Common myeloid progenitor, CD34-positive (primary cell): ENCODE measurements at regions of chr19 and their contacts with region 1.

Region 1: GRCh38 chr19:8487137-8487851 is 15.1 kb downstream of the PRAM1 start:
- DNase-seq: peak; percentile 85 to 98 (median 97)
- H3K4me3 ChIP-seq: peak overlapping the region in 4 of 7 experiments; percentile 3 to 37 (median 17)
- H3K27ac ChIP-seq: peak overlapping the region in 1 of 2 experiments; percentile 55
- H3K4me1 ChIP-seq: peaks cover 5 to 56% (median 47%) of the 10 kb centered on the region in 4 experiments
- H3K27me3 ChIP-seq: no peaks in the 10 kb centered on the region

Region 2: GRCh38 chr19:8324186-8325050 is 162.9 kb before region 1 on chr19:
- CTCF ChIA-PET with region 1: no interaction called
- POLR2A ChIA-PET with region 1: no interaction called
- DNase-seq: no peak
- H3K4me3 ChIP-seq: no peak overlapping the region
- H3K27ac ChIP-seq: no peak overlapping the region
- H3K4me1 ChIP-seq: peaks cover 5 to 42% (median 33%) of the 10 kb centered on the region in 4 experiments
- H3K27me3 ChIP-seq: peaks cover 0 to 14% (median 5%) of the 10 kb centered on the region in 5 experiments

Region 3: GRCh38 chr19:8412783-8413628 is 74.3 kb before region 1 on chr19 and contains the start of gene MARCHF2:
- CTCF ChIA-PET with region 1: interaction called, 11 read pairs
- POLR2A ChIA-PET with region 1: no interaction called
- DNase-seq: peak; percentile 96 to 98 (median 97)
- H3K4me3 ChIP-seq: peak within 1 kb of the TSS; percentile 53 to 89 (median 79)
- H3K27ac ChIP-seq: peak within 1 kb of the TSS in 1 of 2 experiments; percentile 70
- H3K4me1 ChIP-seq: peaks cover 5 to 43% (median 39%) of the 10 kb centered on the region in 4 experiments
- H3K27me3 ChIP-seq: no peaks in the 10 kb centered on the region

Region 4: GRCh38 chr19:8463365-8463764 is 23.9 kb before region 1 on chr19:
- CTCF ChIA-PET with region 1: no interaction called
- POLR2A ChIA-PET with region 1: no interaction called
- DNase-seq: no peak
- H3K4me3 ChIP-seq: no peak overlapping the region
- H3K27ac ChIP-seq: no peak overlapping the region
- H3K4me1 ChIP-seq: peaks cover 0 to 1% (median under 1%) of the 10 kb centered on the region in 4 experiments
- H3K27me3 ChIP-seq: no peaks in the 10 kb centered on the region

Region 5: DNA sequence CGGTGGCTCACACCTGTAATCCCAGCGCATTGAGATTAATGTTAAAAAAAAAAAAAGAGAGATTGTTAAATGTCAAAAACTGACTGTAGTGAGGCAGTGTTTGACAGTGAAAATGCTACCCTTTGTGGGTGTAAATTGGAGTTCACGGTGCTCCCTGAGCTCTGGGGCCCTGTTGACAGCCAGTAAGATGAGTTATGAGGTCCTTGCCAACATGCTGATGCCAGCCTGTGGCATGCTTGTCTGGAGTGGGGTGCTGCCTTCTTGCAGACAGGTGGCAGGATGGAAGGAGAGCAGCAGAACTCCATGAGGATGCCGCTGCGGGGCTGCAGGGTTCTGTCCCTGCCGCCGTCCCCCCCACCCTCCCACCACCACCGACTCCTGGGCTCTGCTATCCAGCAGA is 10.8 kb before region 1 on chr19:
- CTCF ChIA-PET with region 1: interaction called, 14 read pairs
- POLR2A ChIA-PET with region 1: interaction called, 4 read pairs
- DNase-seq: no peak
- H3K4me3 ChIP-seq: no peak overlapping the region
- H3K27ac ChIP-seq: no peak overlapping the region
- H3K4me1 ChIP-seq: peaks cover 3 to 23% (median 14%) of the 10 kb centered on the region in 4 experiments
- H3K27me3 ChIP-seq: no peaks in the 10 kb centered on the region

Region 6: GRCh38 chr19:8500158-8500557 is 12.9 kb after region 1 on chr19:
- CTCF ChIA-PET with region 1: interaction called, 94 read pairs
- POLR2A ChIA-PET with region 1: interaction called, 20 read pairs
- DNase-seq: peak in 2 of 3 donors; percentile 68 to 70
- H3K4me3 ChIP-seq: peak overlapping the region in 6 of 7 experiments; percentile 7 to 64 (median 50)
- H3K27ac ChIP-seq: peak overlapping the region in 1 of 2 experiments; percentile 40
- H3K4me1 ChIP-seq: peaks cover 14 to 90% (median 65%) of the 10 kb centered on the region in 4 experiments
- H3K27me3 ChIP-seq: no peaks in the 10 kb centered on the region

Region 7: GRCh38 chr19:8505680-8506401 is 18.5 kb after region 1 on chr19:
- CTCF ChIA-PET with region 1: interaction called, 94 read pairs
- POLR2A ChIA-PET with region 1: interaction called, 20 read pairs
- DNase-seq: peak in 2 of 3 donors; percentile 55 to 60
- H3K4me3 ChIP-seq: peak overlapping the region; percentile 51 to 85 (median 68)
- H3K27ac ChIP-seq: no peak overlapping the region
- H3K4me1 ChIP-seq: peaks cover 14 to 63% (median 58%) of the 10 kb centered on the region in 4 experiments
- H3K27me3 ChIP-seq: no peaks in the 10 kb centered on the region

Region 8: GRCh38 chr19:8513687-8514504 is 26.6 kb after region 1 on chr19 and contains the start of gene ZNF414:
- CTCF ChIA-PET with region 1: interaction called, 94 read pairs
- POLR2A ChIA-PET with region 1: interaction called, 7 read pairs
- DNase-seq: peak; percentile 89 to 95 (median 94)
- H3K4me3 ChIP-seq: peak within 1 kb of the TSS; percentile 59 to 94 (median 83)
- H3K27ac ChIP-seq: peak within 1 kb of the TSS; percentile 89 to 94
- H3K4me1 ChIP-seq: peaks cover 6 to 66% (median 43%) of the 10 kb centered on the region in 4 experiments
- H3K27me3 ChIP-seq: no peaks in the 10 kb centered on the region

Region 9: GRCh38 chr19:8544168-8544567 is 56.9 kb after region 1 on chr19:
- CTCF ChIA-PET with region 1: no interaction called
- POLR2A ChIA-PET with region 1: no interaction called
- DNase-seq: no peak
- H3K4me3 ChIP-seq: no peak overlapping the region
- H3K27ac ChIP-seq: no peak overlapping the region
- H3K4me1 ChIP-seq: no peaks in the 10 kb centered on the region
- H3K27me3 ChIP-seq: no peaks in the 10 kb centered on the region

Region 10: DNA sequence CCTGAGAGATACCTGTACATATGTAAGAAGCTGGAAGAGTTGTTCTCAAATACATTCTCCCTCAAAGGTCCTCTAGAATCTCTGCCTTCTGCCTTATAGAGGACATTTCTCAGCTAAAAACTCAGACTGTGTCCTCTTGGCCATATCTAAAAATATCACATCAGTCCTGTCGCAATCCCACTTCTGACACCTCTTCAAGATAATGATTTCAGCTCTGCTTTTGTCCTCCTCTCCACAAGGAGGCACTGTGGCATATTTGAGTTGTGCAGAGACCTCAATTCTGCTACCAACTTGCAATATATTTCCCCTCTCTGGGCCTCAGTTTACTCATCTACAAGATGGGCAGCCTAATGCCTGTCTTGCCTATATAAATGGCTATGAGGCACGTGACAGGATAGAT is 106.6 kb after region 1 on chr19:
- CTCF ChIA-PET with region 1: no interaction called
- POLR2A ChIA-PET with region 1: no interaction called
- DNase-seq: peak in 1 of 3 donors; percentile 42
- H3K4me3 ChIP-seq: no peak overlapping the region
- H3K27ac ChIP-seq: no peak overlapping the region
- H3K4me1 ChIP-seq: peaks cover 0 to 22% (median 18%) of the 10 kb centered on the region in 4 experiments
- H3K27me3 ChIP-seq: peaks cover 0 to 5% (median 0%) of the 10 kb centered on the region in 5 experiments